Mammary epithelial cell (primary cell): ENCODE measurements at regions of chr1 and their contacts with region 1.

Region 1: DNA sequence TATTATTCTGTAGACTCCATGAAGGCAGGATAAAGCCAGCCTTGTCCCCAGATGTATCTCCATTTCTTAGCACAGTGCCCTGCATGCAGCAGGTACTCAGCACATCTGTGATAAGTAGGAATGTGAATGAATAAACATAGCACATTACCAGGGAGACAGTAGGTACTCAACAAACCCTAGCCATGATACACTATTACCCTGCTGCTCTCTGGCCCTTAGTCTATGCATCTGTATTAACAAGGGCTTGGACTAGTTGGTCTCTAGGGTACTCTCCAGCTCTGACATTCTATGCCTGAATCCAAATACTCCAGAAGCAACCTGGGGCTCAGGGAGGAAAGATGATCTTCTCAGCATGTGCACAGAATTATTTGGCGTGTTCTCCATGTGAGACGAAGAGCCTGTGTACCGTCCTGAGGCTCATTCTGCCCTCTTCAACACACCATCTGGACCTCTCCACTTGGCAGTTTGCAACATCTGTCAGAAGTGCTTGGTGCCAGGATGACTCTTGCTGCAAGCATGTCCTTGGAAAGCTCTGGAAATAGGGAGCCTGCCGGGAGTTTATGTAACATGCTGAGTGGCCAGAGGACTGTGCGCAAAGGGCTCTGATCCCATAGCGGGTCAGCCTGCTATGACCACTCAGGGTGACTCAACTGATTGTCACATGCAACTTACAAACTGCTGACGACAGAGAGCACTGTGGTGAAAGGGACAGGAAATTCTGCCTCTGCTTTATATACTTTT is 228.2 kb upstream of the USP24 start:
- DNase-seq: peak; percentile 25
- H3K4me3 ChIP-seq: no peak overlapping the region
- H3K27ac ChIP-seq: no peak overlapping the region
- H3K4me1 ChIP-seq: peaks cover 5% of the 10 kb centered on the region
- H3K27me3 ChIP-seq: no peaks in the 10 kb centered on the region
- CTCF ChIP-seq: no peak

Region 2: DNA sequence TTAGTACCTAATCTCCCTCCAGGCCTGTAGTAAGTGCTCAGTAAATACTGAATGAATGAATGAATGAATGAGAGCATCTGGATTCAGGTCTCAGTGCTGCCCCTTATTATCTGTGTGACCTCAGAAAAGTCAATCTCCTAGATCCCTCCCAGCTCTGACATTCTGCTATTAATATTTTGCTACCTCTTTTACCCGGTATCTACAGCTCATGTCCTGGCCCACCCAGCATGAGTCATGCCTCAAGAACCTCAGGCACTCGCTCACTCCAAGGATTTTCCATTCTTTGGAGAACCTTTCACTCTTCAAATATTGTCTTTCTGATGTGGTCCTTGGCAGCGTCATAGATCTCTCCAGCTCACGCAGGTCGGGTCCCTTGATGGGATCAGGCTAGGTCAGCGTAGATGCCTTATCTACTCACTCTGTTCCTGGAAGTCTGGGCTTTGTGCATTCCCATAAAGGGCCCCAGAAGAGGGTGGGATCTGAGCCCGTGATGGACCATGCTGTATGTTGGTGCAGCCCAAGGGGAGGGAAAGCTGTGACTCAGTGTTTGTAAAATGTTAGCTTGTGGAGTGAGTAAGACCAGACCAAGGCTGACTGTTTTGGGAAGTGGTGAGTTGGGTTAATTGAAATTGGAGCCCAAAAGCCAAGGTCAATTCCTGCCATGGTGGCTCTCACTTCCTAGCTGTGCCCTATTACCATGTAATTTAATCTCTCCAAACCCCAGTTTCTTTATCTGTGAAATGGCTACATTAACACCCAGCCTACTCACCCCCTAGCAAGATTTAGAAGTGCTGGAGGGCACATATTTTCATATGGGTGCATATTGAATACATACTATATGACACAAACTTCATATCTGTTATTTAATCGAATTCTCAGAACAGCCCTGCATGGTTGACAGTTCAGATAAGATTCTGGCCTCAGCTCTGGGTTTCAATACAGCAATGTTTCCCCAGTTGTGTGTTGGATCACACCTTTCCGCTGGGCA is 14.1 kb before region 1 on chr1:
- CTCF ChIA-PET with region 1: interaction called, 12 read pairs
- dilution Hi-C with region 1: no loop called
- in situ Hi-C with region 1: no loop called
- intact Hi-C with region 1: loop called (anchors 2 kb)
- DNase-seq: peak; percentile 95
- H3K4me3 ChIP-seq: no peak overlapping the region
- H3K27ac ChIP-seq: peak overlapping the region; percentile 86
- H3K4me1 ChIP-seq: peaks cover 22% of the 10 kb centered on the region
- H3K27me3 ChIP-seq: no peaks in the 10 kb centered on the region
- CTCF ChIP-seq: no peak